ENCODE measurements at regions of chr12 and their contacts with region 1.

Region 1: GRCh38 chr12:124906606-124907261 is 7.7 kb downstream of the UBC start:
- DNase-seq: peak; percentile 100
- ATAC-seq: peak; percentile 21
- H3K4me3 ChIP-seq: no peak overlapping the region
- H3K27ac ChIP-seq: no peak overlapping the region
- H3K4me1 ChIP-seq: peaks cover 31% of the 10 kb centered on the region
- H3K27me3 ChIP-seq: no peaks in the 10 kb centered on the region
- CTCF ChIP-seq: peak; percentile 100

Region 2: DNA sequence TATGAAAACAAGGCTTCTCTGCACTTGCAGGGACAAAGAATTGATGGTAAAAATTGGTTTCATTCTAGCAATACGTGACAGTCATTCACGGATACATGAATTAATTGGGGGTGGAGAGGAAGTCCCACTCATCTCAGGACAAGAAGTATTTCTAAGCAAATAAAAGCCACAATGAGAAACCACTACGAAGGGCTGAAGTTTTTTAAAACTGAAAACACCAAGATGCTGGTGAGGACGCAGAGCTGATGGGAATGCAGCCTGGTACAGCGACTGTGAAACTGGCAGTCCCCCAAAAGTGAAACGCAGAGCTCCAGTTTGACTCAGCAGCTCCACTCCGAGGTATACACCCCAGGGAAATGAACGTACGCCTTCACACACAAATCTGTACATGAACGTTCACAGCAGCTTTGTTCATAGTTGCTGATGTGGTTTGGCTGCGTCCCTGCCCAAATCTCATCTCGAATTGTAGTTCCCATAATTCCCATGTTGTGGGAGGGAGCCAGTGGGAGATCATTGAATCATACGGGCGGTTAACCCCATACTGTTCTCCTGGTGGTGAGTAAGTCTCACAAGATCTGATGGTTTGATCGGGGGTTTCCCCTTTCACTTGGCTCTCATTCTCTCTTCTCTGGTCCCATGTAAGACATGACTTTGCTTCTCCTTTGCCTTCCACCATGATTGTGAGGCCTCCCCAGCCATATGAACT is 132.1 kb before region 1 on chr12:
- CTCF ChIA-PET with region 1: no interaction called
- POLR2A ChIA-PET with region 1: no interaction called
- intact Hi-C with region 1: loop called (anchors 2 kb)
- DNase-seq: peak; percentile 76
- ATAC-seq: peak; percentile 31
- H3K4me3 ChIP-seq: peak overlapping the region; percentile 16; the same call in 1 of the 2 replicates
- H3K27ac ChIP-seq: peak overlapping the region; percentile 49
- H3K4me1 ChIP-seq: peaks cover 34% of the 10 kb centered on the region
- H3K27me3 ChIP-seq: no peaks in the 10 kb centered on the region
- CTCF ChIP-seq: 0 out of 2 replicates have a peak, but pooled peaks have one; percentile 18

Region 3: DNA sequence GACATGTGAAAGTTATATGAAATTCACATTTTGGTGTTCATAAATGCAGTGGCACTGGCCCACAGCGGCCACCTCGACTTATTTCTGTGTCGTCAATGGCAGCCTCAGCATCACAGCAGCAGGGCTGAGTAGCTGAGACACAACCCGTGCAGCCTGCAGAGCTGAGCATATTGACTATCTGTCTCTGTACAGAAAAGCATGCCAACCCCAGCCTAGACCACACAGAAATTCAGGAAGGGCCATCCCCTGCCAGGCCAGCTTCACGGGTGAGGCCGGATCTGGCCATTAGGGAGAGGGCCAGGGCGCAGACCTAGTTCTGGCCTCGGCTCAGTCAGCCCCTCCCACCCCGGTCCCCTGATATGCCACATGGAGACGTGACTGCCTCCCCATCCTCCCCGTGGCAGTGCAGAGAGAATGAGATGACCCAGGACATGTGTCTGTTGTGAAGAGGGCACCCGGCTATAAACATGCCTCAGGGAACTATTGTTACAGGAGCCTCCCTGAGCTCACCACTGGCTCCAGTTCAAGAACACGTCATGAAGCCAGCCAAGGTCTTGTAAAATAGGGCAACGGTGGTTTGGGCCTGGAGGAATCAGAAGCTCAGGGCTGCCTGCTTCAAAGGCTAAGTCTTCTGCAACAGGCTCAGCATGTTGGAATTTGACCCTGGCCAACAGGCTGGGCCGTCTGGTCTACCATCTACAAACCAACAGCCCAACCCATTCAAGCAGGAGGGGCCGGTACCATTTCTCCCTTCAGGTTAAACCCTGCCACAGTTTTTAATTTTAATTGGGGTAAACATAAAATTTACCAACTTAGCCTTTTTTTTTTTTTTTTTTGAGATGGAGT is 68.6 kb before region 1 on chr12:
- CTCF ChIA-PET with region 1: interaction called, 9 read pairs
- POLR2A ChIA-PET with region 1: interaction called, 4 read pairs
- intact Hi-C with region 1: loop called (anchors 1 kb)
- DNase-seq: peak; percentile 100
- ATAC-seq: peak; percentile 93
- H3K4me3 ChIP-seq: peak overlapping the region; percentile 23; the same call in 1 of the 2 replicates
- H3K27ac ChIP-seq: peak overlapping the region; percentile 87
- H3K4me1 ChIP-seq: peaks cover 38% of the 10 kb centered on the region
- H3K27me3 ChIP-seq: no peaks in the 10 kb centered on the region
- CTCF ChIP-seq: no peak

Region 4: DNA sequence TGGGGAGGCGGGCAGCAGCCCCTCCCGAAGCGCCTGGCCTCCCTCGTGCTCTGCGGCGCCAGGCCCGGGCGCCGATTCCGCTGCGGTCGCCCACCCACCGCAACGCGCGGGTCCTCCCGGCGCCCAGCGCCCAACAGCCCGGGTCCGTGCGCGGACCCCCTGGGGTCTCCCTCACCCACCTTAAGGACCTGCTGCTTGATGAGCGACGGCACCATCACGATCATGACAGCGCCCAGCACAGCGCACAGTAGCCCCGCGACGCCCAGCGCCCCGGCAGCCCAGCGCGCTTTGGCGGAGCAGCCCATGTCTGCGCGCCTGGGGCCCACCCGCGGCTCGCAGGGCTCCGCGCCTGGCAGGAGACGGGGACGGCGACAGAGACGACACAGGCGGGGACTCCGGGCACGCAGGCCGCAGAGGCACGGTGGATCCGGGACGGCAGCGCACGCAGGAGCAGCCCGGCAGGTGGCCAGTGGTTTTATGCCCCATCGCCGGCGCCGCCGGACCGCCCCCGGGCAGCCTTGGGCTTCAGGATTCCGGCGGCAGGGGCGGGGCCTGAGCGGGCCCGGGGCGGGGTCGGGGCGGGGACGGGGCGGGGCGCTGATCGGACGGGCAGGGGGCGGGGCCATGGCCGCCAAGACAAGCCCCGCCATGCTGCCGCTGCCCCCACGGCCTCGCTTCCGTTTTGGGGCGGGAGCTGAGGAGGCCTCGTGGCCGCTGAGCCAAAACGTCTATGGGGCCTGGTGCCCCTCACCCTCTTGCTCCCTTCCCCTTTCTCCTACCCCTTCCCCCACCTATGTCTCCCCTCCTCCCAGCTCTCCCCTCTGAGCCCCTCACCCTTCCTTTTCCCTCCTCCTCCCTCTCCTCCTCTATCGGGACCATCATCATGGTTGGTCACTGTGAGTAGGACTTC is 43.1 kb before region 1 on chr12 and contains the start of gene SCARB1:
- CTCF ChIA-PET with region 1: interaction called, 3 read pairs
- POLR2A ChIA-PET with region 1: no interaction called
- intact Hi-C with region 1: loop called (anchors 1 kb)
- DNase-seq: peak; percentile 86
- ATAC-seq: peak; percentile 81
- H3K4me3 ChIP-seq: peak within 1 kb of the TSS; percentile 92
- H3K27ac ChIP-seq: peak within 1 kb of the TSS; percentile 37
- H3K4me1 ChIP-seq: peaks cover 26% of the 10 kb centered on the region
- H3K27me3 ChIP-seq: no peaks in the 10 kb centered on the region
- CTCF ChIP-seq: no peak
- total RNA-seq, gene SCARB1: 79.1 and 80.5 TPM in 2 replicates

Region 5: GRCh38 chr12:124917135-124917840 is 10.6 kb after region 1 on chr12:
- CTCF ChIA-PET with region 1: interaction called, 7 read pairs
- POLR2A ChIA-PET with region 1: interaction called, 13 read pairs
- intact Hi-C with region 1: no loop called
- DNase-seq: peak; percentile 100
- ATAC-seq: peak; percentile 72
- H3K4me3 ChIP-seq: peak overlapping the region; percentile 94
- H3K27ac ChIP-seq: peak overlapping the region; percentile 98
- H3K4me1 ChIP-seq: peaks cover 53% of the 10 kb centered on the region
- H3K27me3 ChIP-seq: no peaks in the 10 kb centered on the region
- CTCF ChIP-seq: no peak

Region 6: DNA sequence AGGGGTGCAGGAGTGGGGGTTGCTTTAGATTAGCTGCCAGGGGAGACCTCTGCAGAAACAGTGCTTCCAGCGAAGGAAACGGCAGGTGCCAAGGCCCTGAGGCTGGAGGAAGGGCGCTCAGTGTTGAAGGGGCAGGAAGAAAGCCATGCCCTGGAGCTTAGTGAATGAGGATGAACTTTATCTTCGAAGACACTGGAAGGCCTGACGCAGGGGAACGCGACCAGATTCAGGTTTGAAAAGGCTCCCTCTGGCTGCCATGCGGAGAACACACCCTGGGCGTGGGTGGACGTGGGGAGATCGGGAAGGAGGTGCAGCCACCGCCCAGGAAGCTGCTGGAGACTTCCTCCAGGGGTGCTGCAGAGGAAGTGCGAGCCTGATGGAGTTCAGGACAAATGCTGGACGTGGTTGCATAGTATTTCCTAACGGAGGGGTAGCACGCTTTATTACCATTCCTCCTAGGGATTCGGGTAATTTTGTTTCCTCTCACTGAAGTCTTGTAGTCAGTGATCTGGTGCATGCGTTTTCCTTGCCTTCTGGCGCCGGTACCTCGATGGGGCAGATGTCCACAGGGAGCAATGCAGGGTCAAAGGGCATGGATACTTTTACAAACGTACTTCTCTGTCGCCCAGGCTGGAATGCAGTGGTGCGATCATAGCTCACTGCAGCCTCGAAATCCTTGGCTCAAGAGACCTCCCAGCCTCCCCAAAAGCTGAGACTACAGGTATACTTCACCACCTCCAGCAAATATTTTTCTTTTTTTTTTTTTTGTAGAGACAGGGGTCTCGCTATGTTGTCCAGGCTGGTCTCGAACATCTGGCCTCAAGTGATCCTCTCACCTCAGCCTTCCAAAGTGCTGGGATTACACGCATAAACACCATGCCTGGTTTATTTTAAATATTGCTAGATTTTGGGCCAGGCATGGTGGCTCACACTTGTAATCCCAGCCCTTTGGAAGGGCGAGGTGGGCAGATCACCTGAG is 34.1 kb after region 1 on chr12:
- CTCF ChIA-PET with region 1: interaction called, 54 read pairs
- POLR2A ChIA-PET with region 1: interaction called, 10 read pairs
- intact Hi-C with region 1: loop called (anchors 1 kb)
- DNase-seq: peak; percentile 97
- ATAC-seq: peak; percentile 54
- H3K4me3 ChIP-seq: peak overlapping the region; percentile 71
- H3K27ac ChIP-seq: peak overlapping the region; percentile 61
- H3K4me1 ChIP-seq: peaks cover 24% of the 10 kb centered on the region
- H3K27me3 ChIP-seq: no peaks in the 10 kb centered on the region
- CTCF ChIP-seq: peak; percentile 95

Region 7: GRCh38 chr12:125079648-125080645 is 173.2 kb after region 1 on chr12:
- CTCF ChIA-PET with region 1: no interaction called
- POLR2A ChIA-PET with region 1: no interaction called
- intact Hi-C with region 1: no loop called
- DNase-seq: no peak
- ATAC-seq: no peak
- H3K4me3 ChIP-seq: no peak overlapping the region
- H3K27ac ChIP-seq: no peak overlapping the region
- H3K4me1 ChIP-seq: no peaks in the 10 kb centered on the region
- H3K27me3 ChIP-seq: no peaks in the 10 kb centered on the region
- CTCF ChIP-seq: no peak

Measured in PC-3 (cell line).